Esophagus squamous epithelium (tissue), 5 donors: ENCODE measurements at regions of chr5 and their contacts with region 1.

Region 1: GRCh38 chr5:164504141-164504772 is 998.8 kb downstream of the MAT2B start:
- DNase-seq: no peak
- H3K4me3 ChIP-seq: peak overlapping the region in 1 of 4 donors; percentile 24
- H3K27ac ChIP-seq: no peak overlapping the region
- H3K4me1 ChIP-seq: no peaks in the 10 kb centered on the region
- H3K27me3 ChIP-seq: no peaks in the 10 kb centered on the region
- CTCF ChIP-seq: peak; percentile 27 to 77 (median 66)
- POLR2A ChIP-seq: no peak

Region 2: GRCh38 chr5:163564321-163564938 is 939.8 kb before region 1 on chr5:
- intact Hi-C with region 1: loop called (anchors 10 kb)
- DNase-seq: peak; percentile 0
- H3K4me3 ChIP-seq: no peak overlapping the region
- H3K27ac ChIP-seq: no peak overlapping the region
- H3K4me1 ChIP-seq: peaks cover 10 to 23% (median 11%) of the 10 kb centered on the region in 3 donors
- H3K27me3 ChIP-seq: peaks cover 0 to 25% (median 0%) of the 10 kb centered on the region in 4 donors
- CTCF ChIP-seq: peak; percentile 47 to 90 (median 87)
- POLR2A ChIP-seq: no peak

Region 3: DNA sequence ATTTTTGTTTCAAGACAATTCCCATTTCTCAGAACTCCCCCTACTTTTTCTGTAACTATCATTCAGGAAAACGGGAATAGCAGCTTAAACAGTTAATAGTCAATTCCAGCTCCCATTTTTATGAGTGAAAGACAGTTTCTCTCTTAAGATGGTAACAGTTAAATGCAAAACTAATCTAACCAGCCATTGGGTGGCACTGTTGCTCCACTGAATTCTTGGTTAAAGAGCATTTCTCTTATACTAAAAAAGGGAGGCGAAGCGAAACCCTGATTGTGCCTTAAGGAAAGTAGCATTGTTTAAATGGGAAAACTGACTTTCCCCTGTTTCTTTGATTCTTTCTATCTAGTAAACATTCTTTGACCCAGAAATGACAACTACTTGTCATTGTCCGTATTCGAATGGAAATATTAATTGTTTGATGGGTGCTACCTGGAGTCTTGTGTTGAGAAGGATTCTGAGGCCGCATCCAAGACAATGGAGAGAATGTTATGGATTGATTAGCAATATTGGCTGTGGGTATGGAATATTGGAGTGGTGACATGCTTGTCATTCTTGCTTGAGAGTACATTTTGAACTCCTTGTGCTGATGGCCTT is 491.1 kb before region 1 on chr5:
- intact Hi-C with region 1: loop called (anchors 10 kb)
- DNase-seq: no peak
- H3K4me3 ChIP-seq: no peak overlapping the region
- H3K27ac ChIP-seq: no peak overlapping the region
- H3K4me1 ChIP-seq: no peaks in the 10 kb centered on the region
- H3K27me3 ChIP-seq: no peaks in the 10 kb centered on the region
- CTCF ChIP-seq: peak; percentile 55 to 71 (median 60)
- POLR2A ChIP-seq: no peak